HEK293 (cell line): ENCODE measurements at regions of chr14 and their contacts with region 1.

Region 1: GRCh38 chr14:24075485-24076301 is 4.3 kb downstream of the CPNE6 start:
- H3K4me3 ChIP-seq: no peak overlapping the region
- H3K27ac ChIP-seq: no peak overlapping the region
- H3K4me1 ChIP-seq: peaks cover 5% of the 10 kb centered on the region; the same call in 1 of the 2 replicates
- CTCF ChIP-seq: no peak

Region 2: GRCh38 chr14:24086193-24086955 is 10.7 kb after region 1 on chr14:
- CTCF ChIA-PET with region 1: interaction called, 77 read pairs
- POLR2A ChIA-PET with region 1: interaction called, 7 read pairs
- H3K4me3 ChIP-seq: no peak overlapping the region
- H3K27ac ChIP-seq: no peak overlapping the region
- H3K4me1 ChIP-seq: peaks cover 3% of the 10 kb centered on the region; the same call in 1 of the 2 replicates
- CTCF ChIP-seq: no peak